CD14-positive monocyte (primary cell): ENCODE measurements at regions of chr12 and their contacts with region 1.

Region 1: GRCh38 chr12:124906606-124907261 is 7.7 kb downstream of the UBC start:
- DNase-seq: peak; percentile 82 to 93 (median 86)
- H3K4me3 ChIP-seq: no peak overlapping the region
- H3K4me3 Mint-ChIP-seq: no peak overlapping the region
- H3K27ac ChIP-seq: no peak overlapping the region
- H3K27ac Mint-ChIP-seq: peak overlapping the region in 1 of 7 donors; percentile 47
- H3K4me1 ChIP-seq: peaks cover 20 to 30% of the 10 kb centered on the region in 2 donors
- H3K4me1 Mint-ChIP-seq: peaks cover 38% of the 10 kb centered on the region
- H3K27me3 ChIP-seq: no peaks in the 10 kb centered on the region
- H3K27me3 Mint-ChIP-seq: peaks cover 0 to 2% (median 0%) of the 10 kb centered on the region in 3 donors
- CTCF ChIP-seq: peak; percentile 100

Region 2: GRCh38 chr12:124036674-124037109 is 870.0 kb before region 1 on chr12:
- intact Hi-C with region 1: loop called in 1 of 2 experiments (anchors 10 kb)
- DNase-seq: peak; percentile 34 to 55 (median 44)
- H3K4me3 ChIP-seq: no peak overlapping the region
- H3K4me3 Mint-ChIP-seq: no peak overlapping the region
- H3K27ac ChIP-seq: no peak overlapping the region
- H3K27ac Mint-ChIP-seq: peak overlapping the region in 1 of 7 donors; percentile 19
- H3K4me1 ChIP-seq: peaks cover 0 to 4% of the 10 kb centered on the region in 2 donors
- H3K4me1 Mint-ChIP-seq: peaks cover 16% of the 10 kb centered on the region
- H3K27me3 ChIP-seq: no peaks in the 10 kb centered on the region
- H3K27me3 Mint-ChIP-seq: peaks cover 0 to 3% (median 3%) of the 10 kb centered on the region in 3 donors
- CTCF ChIP-seq: peak; percentile 95

Region 3: GRCh38 chr12:124852329-124852831 is 54.4 kb before region 1 on chr12:
- intact Hi-C with region 1: loop called in 1 of 2 experiments (anchors 10 kb)
- DNase-seq: peak; percentile 78 to 88 (median 84)
- H3K4me3 ChIP-seq: peak overlapping the region in 1 of 3 experiments; percentile 59
- H3K4me3 Mint-ChIP-seq: peak overlapping the region; percentile 72 to 87
- H3K27ac ChIP-seq: peak overlapping the region; percentile 86
- H3K27ac Mint-ChIP-seq: peak overlapping the region; percentile 93 to 97 (median 95)
- H3K4me1 ChIP-seq: peaks cover 57 to 59% of the 10 kb centered on the region in 2 donors
- H3K4me1 Mint-ChIP-seq: peaks cover 57% of the 10 kb centered on the region
- H3K27me3 ChIP-seq: no peaks in the 10 kb centered on the region
- H3K27me3 Mint-ChIP-seq: peaks cover 0 to 4% (median 0%) of the 10 kb centered on the region in 3 donors
- CTCF ChIP-seq: no peak

Region 4: GRCh38 chr12:124940549-124941527 is 34.1 kb after region 1 on chr12:
- intact Hi-C with region 1: loop called (anchors 2 to 5 kb)
- DNase-seq: peak; percentile 73 to 88 (median 84)
- H3K4me3 ChIP-seq: peak overlapping the region in 2 of 3 experiments; percentile 3 to 77
- H3K4me3 Mint-ChIP-seq: no peak overlapping the region
- H3K27ac ChIP-seq: peak overlapping the region; percentile 9 to 30
- H3K27ac Mint-ChIP-seq: peak overlapping the region in 1 of 7 donors; percentile 30
- H3K4me1 ChIP-seq: peaks cover 57 to 58% of the 10 kb centered on the region in 2 donors
- H3K4me1 Mint-ChIP-seq: peaks cover 30% of the 10 kb centered on the region
- H3K27me3 ChIP-seq: no peaks in the 10 kb centered on the region
- H3K27me3 Mint-ChIP-seq: peaks cover 3 to 7% (median 5%) of the 10 kb centered on the region in 3 donors
- CTCF ChIP-seq: peak; percentile 94

Region 5: GRCh38 chr12:125015680-125016310 is 109.1 kb after region 1 on chr12:
- intact Hi-C with region 1: no loop called
- DNase-seq: no peak
- H3K4me3 ChIP-seq: no peak overlapping the region
- H3K4me3 Mint-ChIP-seq: no peak overlapping the region
- H3K27ac ChIP-seq: no peak overlapping the region
- H3K27ac Mint-ChIP-seq: peak overlapping the region in 3 of 7 donors; percentile 29 to 76 (median 59)
- H3K4me1 ChIP-seq: no peaks in the 10 kb centered on the region
- H3K4me1 Mint-ChIP-seq: peaks cover 5% of the 10 kb centered on the region
- H3K27me3 ChIP-seq: no peaks in the 10 kb centered on the region
- H3K27me3 Mint-ChIP-seq: no peaks in the 10 kb centered on the region
- CTCF ChIP-seq: no peak